Naive thymus-derived CD4-positive, alpha-beta T cell (primary cell): ENCODE measurements at regions of chr19 and their contacts with region 1.

Region 1: GRCh38 chr19:39846176-39846677 is at the start of gene FBL:
- DNase-seq: peak; percentile 93 to 99 (median 97)
- ATAC-seq: peak; percentile 95
- H3K4me3 ChIP-seq: peak within 1 kb of the TSS; percentile 95
- H3K4me3 Mint-ChIP-seq: peak within 1 kb of the TSS; percentile 82 to 95 (median 92)
- H3K27ac ChIP-seq: peak within 1 kb of the TSS; percentile 94
- H3K27ac Mint-ChIP-seq: peak within 1 kb of the TSS; percentile 86 to 99 (median 95)
- H3K4me1 ChIP-seq: peaks cover 13 to 43% of the 10 kb centered on the region in 2 donors
- H3K4me1 Mint-ChIP-seq: peaks cover 38 to 55% (median 45%) of the 10 kb centered on the region in 7 donors
- H3K27me3 ChIP-seq: no peaks in the 10 kb centered on the region
- H3K27me3 Mint-ChIP-seq: peaks cover 0 to under 1% (median 0%) of the 10 kb centered on the region in 5 donors
- total RNA-seq, gene FBL: 237 to 387 (median 369) TPM

Region 2: GRCh38 chr19:39435499-39436349 is 410.5 kb before region 1 on chr19 and contains the start of gene RPS16:
- CTCF ChIA-PET with region 1: no interaction called
- POLR2A ChIA-PET with region 1: no interaction called
- intact Hi-C with region 1: loop called in 1 of 2 experiments (anchors 5 kb)
- DNase-seq: peak; percentile 93 to 100 (median 98)
- ATAC-seq: peak; percentile 98
- H3K4me3 ChIP-seq: peak within 1 kb of the TSS; percentile 98
- H3K4me3 Mint-ChIP-seq: peak within 1 kb of the TSS; percentile 92 to 100 (median 98)
- H3K27ac ChIP-seq: peak within 1 kb of the TSS; percentile 97
- H3K27ac Mint-ChIP-seq: peak within 1 kb of the TSS; percentile 95 to 100 (median 99)
- H3K4me1 ChIP-seq: peaks cover 27% of the 10 kb centered on the region in 2 donors
- H3K4me1 Mint-ChIP-seq: peaks cover 20 to 53% (median 40%) of the 10 kb centered on the region in 7 donors
- H3K27me3 ChIP-seq: no peaks in the 10 kb centered on the region
- H3K27me3 Mint-ChIP-seq: peaks cover 0 to 5% (median 0%) of the 10 kb centered on the region in 5 donors
- total RNA-seq, gene RPS16: 2,281 to 4,335 (median 4,063) TPM

Region 3: DNA sequence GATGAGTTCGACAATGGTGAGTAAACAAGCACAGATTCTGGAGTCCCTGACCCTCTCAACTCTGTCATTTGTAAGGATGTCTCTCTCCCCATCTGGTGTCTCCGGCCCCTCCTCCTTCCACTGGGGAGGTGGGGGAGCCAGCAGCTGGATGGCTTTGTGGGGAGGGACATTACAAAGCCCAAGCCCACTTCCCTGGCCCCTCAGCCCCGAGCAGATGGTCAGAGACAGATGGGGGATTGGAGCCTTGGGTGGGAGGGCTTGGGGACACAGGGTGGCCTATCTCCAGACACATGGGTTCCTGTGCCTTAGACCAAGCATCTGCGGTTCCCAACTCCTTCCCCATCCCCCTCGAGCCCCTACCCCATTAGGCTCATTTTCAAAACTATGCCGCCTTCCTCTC is 363.1 kb before region 1 on chr19:
- CTCF ChIA-PET with region 1: no interaction called
- POLR2A ChIA-PET with region 1: no interaction called
- intact Hi-C with region 1: no loop called
- DNase-seq: no peak
- ATAC-seq: no peak
- H3K4me3 ChIP-seq: no peak overlapping the region
- H3K4me3 Mint-ChIP-seq: peak overlapping the region in 9 of 10 donors; percentile 14 to 91 (median 50)
- H3K27ac ChIP-seq: no peak overlapping the region
- H3K27ac Mint-ChIP-seq: peak overlapping the region in 1 of 9 donors; percentile 75
- H3K4me1 ChIP-seq: peaks cover 10 to 11% of the 10 kb centered on the region in 2 donors
- H3K4me1 Mint-ChIP-seq: peaks cover 12 to 32% (median 25%) of the 10 kb centered on the region in 7 donors
- H3K27me3 ChIP-seq: no peaks in the 10 kb centered on the region
- H3K27me3 Mint-ChIP-seq: no peaks in the 10 kb centered on the region

Region 4: GRCh38 chr19:39671738-39672363 is 174.4 kb before region 1 on chr19:
- CTCF ChIA-PET with region 1: interaction called, 11 read pairs
- POLR2A ChIA-PET with region 1: no interaction called
- intact Hi-C with region 1: loop called in 1 of 2 experiments (anchors 1 kb)
- DNase-seq: peak in 8 of 9 donors; percentile 32 to 73 (median 66)
- ATAC-seq: peak; percentile 79
- H3K4me3 ChIP-seq: no peak overlapping the region
- H3K4me3 Mint-ChIP-seq: peak overlapping the region in 7 of 10 donors; percentile 29 to 64 (median 36)
- H3K27ac ChIP-seq: no peak overlapping the region
- H3K27ac Mint-ChIP-seq: peak overlapping the region in 8 of 9 donors; percentile 24 to 81 (median 60)
- H3K4me1 ChIP-seq: peaks cover 4 to 25% of the 10 kb centered on the region in 2 donors
- H3K4me1 Mint-ChIP-seq: peaks cover 8 to 41% (median 35%) of the 10 kb centered on the region in 7 donors
- H3K27me3 ChIP-seq: no peaks in the 10 kb centered on the region
- H3K27me3 Mint-ChIP-seq: peaks cover 0 to 10% (median 5%) of the 10 kb centered on the region in 5 donors

Region 5: DNA sequence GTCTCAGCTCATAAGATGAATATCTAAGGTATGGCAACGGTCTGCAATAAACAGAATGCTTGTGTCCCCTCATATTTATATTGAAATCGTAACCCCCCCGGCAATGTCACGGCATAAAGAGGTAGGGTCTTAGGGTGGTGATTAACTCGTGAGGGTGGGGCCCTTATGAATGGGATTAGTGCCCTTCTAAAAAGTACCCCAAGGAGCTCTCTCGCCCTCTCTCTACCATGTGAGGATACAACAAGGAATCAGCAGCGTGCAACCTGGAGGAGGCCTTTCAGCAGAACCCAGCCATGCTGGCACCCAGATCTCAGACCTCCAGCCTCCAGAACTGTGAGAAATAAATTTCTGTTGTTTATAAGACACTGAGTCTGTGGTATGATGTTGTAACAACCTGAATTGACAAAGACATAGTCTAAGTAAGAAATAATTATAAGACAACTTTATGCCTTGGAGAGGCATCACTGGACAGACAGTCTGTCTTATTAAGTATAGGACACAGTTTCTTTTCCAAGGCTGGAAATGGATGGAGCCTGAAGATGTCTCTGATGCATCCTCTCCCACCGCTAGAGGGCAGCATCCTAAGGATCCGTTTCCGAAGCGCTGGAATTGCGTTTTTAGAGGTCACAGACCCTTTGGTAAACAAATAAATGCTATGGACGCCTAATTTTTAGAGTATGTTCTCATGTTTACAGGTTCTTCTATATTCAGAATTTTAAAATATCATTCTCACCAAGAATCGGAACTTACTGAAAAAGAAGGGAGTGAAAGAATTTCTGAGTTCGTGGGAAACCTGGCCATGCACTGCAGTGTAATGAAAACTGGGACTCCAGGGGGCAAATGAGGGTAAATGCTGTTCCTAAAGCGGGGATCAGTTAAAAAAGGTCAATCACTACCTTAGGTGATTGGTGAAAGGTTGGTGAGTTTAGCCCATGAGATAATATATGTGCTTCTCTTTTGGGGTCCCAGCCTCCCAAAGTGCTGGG is 80.8 kb before region 1 on chr19:
- CTCF ChIA-PET with region 1: interaction called, 3 read pairs
- POLR2A ChIA-PET with region 1: no interaction called
- intact Hi-C with region 1: loop called in 1 of 2 experiments (anchors 1 kb)
- DNase-seq: peak in 4 of 9 donors; percentile 4 to 33 (median 11)
- ATAC-seq: no peak
- H3K4me3 ChIP-seq: no peak overlapping the region
- H3K4me3 Mint-ChIP-seq: peak overlapping the region in 1 of 10 donors; percentile 14
- H3K27ac ChIP-seq: no peak overlapping the region
- H3K27ac Mint-ChIP-seq: peak overlapping the region in 1 of 9 donors; percentile 14
- H3K4me1 ChIP-seq: no peaks in the 10 kb centered on the region
- H3K4me1 Mint-ChIP-seq: peaks cover 0 to 4% (median 0%) of the 10 kb centered on the region in 7 donors
- H3K27me3 ChIP-seq: no peaks in the 10 kb centered on the region
- H3K27me3 Mint-ChIP-seq: peaks cover 0 to 15% (median 4%) of the 10 kb centered on the region in 5 donors

Region 6: GRCh38 chr19:39824143-39825092 is 21.8 kb before region 1 on chr19:
- CTCF ChIA-PET with region 1: interaction called, 11 read pairs
- POLR2A ChIA-PET with region 1: interaction called, 6 read pairs
- intact Hi-C with region 1: loop called (anchors 1 kb)
- DNase-seq: peak; percentile 55 to 92 (median 86)
- ATAC-seq: peak; percentile 98
- H3K4me3 ChIP-seq: peak overlapping the region; percentile 85
- H3K4me3 Mint-ChIP-seq: no peak overlapping the region
- H3K27ac ChIP-seq: peak overlapping the region; percentile 72
- H3K27ac Mint-ChIP-seq: no peak overlapping the region
- H3K4me1 ChIP-seq: peaks cover 14 to 19% of the 10 kb centered on the region in 2 donors
- H3K4me1 Mint-ChIP-seq: peaks cover 0 to 19% (median 10%) of the 10 kb centered on the region in 7 donors
- H3K27me3 ChIP-seq: no peaks in the 10 kb centered on the region
- H3K27me3 Mint-ChIP-seq: no peaks in the 10 kb centered on the region

Region 7: GRCh38 chr19:39858541-39858940 is 12.3 kb after region 1 on chr19:
- CTCF ChIA-PET with region 1: no interaction called
- POLR2A ChIA-PET with region 1: interaction called, 4 read pairs
- intact Hi-C with region 1: loop called in 1 of 2 experiments (anchors 1 kb)
- DNase-seq: peak in 2 of 9 donors; percentile 73 to 87
- ATAC-seq: no peak
- H3K4me3 ChIP-seq: no peak overlapping the region
- H3K4me3 Mint-ChIP-seq: peak overlapping the region in 1 of 10 donors; percentile 74
- H3K27ac ChIP-seq: no peak overlapping the region
- H3K27ac Mint-ChIP-seq: peak overlapping the region in 2 of 9 donors; percentile 31 to 83
- H3K4me1 ChIP-seq: no peaks in the 10 kb centered on the region
- H3K4me1 Mint-ChIP-seq: no peaks in the 10 kb centered on the region
- H3K27me3 ChIP-seq: no peaks in the 10 kb centered on the region
- H3K27me3 Mint-ChIP-seq: peaks cover 0 to 6% (median 0%) of the 10 kb centered on the region in 5 donors

Region 8: GRCh38 chr19:39873385-39873784 is 27.2 kb after region 1 on chr19:
- CTCF ChIA-PET with region 1: no interaction called
- POLR2A ChIA-PET with region 1: no interaction called
- intact Hi-C with region 1: no loop called
- DNase-seq: no peak
- ATAC-seq: no peak
- H3K4me3 ChIP-seq: no peak overlapping the region
- H3K4me3 Mint-ChIP-seq: no peak overlapping the region
- H3K27ac ChIP-seq: no peak overlapping the region
- H3K27ac Mint-ChIP-seq: no peak overlapping the region
- H3K4me1 ChIP-seq: no peaks in the 10 kb centered on the region
- H3K4me1 Mint-ChIP-seq: peaks cover 0 to 4% (median 0%) of the 10 kb centered on the region in 7 donors
- H3K27me3 ChIP-seq: no peaks in the 10 kb centered on the region
- H3K27me3 Mint-ChIP-seq: no peaks in the 10 kb centered on the region

Region 9: GRCh38 chr19:39983695-39984305 is 137.6 kb after region 1 on chr19:
- CTCF ChIA-PET with region 1: no interaction called
- POLR2A ChIA-PET with region 1: no interaction called
- intact Hi-C with region 1: no loop called
- DNase-seq: no peak
- ATAC-seq: no peak
- H3K4me3 ChIP-seq: no peak overlapping the region
- H3K4me3 Mint-ChIP-seq: no peak overlapping the region
- H3K27ac ChIP-seq: no peak overlapping the region
- H3K27ac Mint-ChIP-seq: peak overlapping the region in 3 of 9 donors; percentile 4 to 76 (median 62)
- H3K4me1 ChIP-seq: no peaks in the 10 kb centered on the region
- H3K4me1 Mint-ChIP-seq: peaks cover 2 to 23% (median 12%) of the 10 kb centered on the region in 7 donors
- H3K27me3 ChIP-seq: no peaks in the 10 kb centered on the region
- H3K27me3 Mint-ChIP-seq: no peaks in the 10 kb centered on the region

Region 10: DNA sequence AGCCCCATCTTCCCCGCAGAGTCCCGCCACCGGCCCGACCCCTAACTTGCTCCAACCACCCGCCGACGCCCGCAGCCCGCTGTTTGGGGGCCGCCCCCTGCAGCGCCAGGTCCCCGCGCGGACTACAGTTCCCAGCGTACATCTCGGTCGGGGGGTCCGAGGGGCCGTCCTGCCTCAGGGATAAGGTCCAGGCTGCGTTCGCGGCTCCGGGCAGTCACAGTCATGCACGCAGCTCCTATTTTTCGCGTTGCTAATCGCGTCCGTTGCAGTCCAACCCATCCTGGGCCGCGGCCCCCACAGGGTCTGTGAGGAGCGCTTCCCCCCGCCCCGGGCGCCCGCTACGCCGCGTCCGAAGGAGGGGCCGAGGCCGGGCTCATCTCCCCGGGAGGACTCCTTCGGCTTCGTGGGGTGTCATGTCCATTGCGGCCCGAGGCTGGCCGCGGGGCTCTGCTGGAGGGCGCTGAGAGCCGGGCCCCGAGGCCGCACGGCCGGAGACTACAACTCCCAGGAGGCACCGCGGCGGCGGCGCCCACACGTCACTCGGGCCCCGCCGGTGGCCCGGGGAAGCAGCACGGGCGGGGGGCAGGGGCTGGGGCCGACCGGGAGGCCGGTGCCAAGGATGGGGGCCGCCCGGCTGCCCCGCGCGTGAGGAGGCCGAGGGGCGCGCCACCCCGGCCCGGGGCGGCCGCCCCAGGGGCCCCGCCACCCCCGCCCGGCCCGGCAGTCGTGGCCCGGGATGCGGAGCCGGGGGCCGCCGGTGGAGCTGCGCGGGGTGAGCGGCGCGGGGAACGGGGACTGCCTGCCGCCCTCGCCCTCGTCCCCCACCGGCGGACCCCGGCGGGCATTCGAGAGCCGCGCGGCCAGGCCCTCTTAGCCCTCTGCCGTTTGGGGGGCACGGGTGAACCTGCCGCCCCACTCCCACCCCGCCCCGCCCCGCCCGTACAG is 344.9 kb after region 1 on chr19 and contains the start of gene MAP3K10:
- CTCF ChIA-PET with region 1: no interaction called
- POLR2A ChIA-PET with region 1: interaction called, 3 read pairs
- intact Hi-C with region 1: loop called in 1 of 2 experiments (anchors 5 kb)
- DNase-seq: peak; percentile 50 to 84 (median 67)
- ATAC-seq: peak; percentile 95
- H3K4me3 ChIP-seq: peak within 1 kb of the TSS; percentile 97
- H3K4me3 Mint-ChIP-seq: peak within 1 kb of the TSS; percentile 76 to 92 (median 86)
- H3K27ac ChIP-seq: peak within 1 kb of the TSS; percentile 86
- H3K27ac Mint-ChIP-seq: peak within 1 kb of the TSS; percentile 53 to 94 (median 87)
- H3K4me1 ChIP-seq: peaks cover 5 to 10% of the 10 kb centered on the region in 2 donors
- H3K4me1 Mint-ChIP-seq: peaks cover 14 to 39% (median 30%) of the 10 kb centered on the region in 7 donors
- H3K27me3 ChIP-seq: no peaks in the 10 kb centered on the region
- H3K27me3 Mint-ChIP-seq: no peaks in the 10 kb centered on the region
- total RNA-seq, gene MAP3K10: 22.3 to 31.5 (median 27.0) TPM